HepG2 (cell line): ENCODE measurements at regions of chrX and their contacts with region 1.

Region 1: DNA sequence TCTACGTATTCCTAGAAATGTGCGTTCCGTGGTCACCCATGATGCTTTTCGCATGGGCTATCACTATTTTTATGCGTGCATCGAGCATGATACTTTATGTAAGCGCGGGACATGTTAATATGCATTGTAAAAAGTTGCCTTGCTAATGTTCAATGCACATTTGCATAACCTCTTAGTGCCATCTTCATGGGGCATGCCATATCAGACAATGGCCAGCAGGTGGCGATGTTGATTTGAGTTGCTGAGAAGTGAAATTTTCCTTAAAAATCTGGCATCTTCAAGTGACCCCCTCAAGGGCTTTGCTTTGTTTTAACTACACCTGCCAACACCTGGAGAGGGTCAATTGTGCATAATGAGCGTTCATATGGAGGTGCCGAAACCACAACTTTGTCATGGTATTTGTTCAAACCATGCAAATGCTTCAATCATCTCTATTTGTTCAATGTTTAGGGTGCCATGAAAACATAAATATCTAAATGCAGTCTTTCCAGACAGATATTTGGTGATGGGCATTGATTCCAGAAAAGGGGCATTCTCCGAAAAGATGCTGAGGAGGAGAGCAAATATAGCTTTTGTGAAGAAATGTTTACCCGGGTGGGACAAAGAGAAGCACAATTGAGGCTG is 833.9 kb upstream of the PRKX start:
- DNase-seq: peak; percentile 8
- ATAC-seq: no peak
- H3K4me3 ChIP-seq: no peak overlapping the region
- H3K27ac ChIP-seq: no peak overlapping the region
- H3K4me1 ChIP-seq: no peaks in the 10 kb centered on the region
- H3K27me3 ChIP-seq: no peaks in the 10 kb centered on the region
- CTCF ChIP-seq: peak; percentile 64
- EP300 ChIP-seq: no peak
- POLR2A ChIP-seq: no peak
- RAD21 ChIP-seq: 0 out of 2 replicates have a peak, but pooled peaks have one; percentile 26

Region 2: GRCh38 chrX:3962511-3963311 is 584.6 kb before region 1 on chrX:
- CTCF ChIA-PET with region 1: no interaction called
- POLR2A ChIA-PET with region 1: no interaction called
- in situ Hi-C with region 1: loop called (anchors 25 kb)
- intact Hi-C with region 1: no loop called
- DNase-seq: peak; percentile 1
- ATAC-seq: peak; percentile 49
- H3K4me3 ChIP-seq: no peak overlapping the region
- H3K27ac ChIP-seq: no peak overlapping the region
- H3K4me1 ChIP-seq: no peaks in the 10 kb centered on the region
- H3K27me3 ChIP-seq: no peaks in the 10 kb centered on the region
- CTCF ChIP-seq: peak; percentile 48
- EP300 ChIP-seq: no peak
- POLR2A ChIP-seq: no peak
- RAD21 ChIP-seq: no peak

Region 3: DNA sequence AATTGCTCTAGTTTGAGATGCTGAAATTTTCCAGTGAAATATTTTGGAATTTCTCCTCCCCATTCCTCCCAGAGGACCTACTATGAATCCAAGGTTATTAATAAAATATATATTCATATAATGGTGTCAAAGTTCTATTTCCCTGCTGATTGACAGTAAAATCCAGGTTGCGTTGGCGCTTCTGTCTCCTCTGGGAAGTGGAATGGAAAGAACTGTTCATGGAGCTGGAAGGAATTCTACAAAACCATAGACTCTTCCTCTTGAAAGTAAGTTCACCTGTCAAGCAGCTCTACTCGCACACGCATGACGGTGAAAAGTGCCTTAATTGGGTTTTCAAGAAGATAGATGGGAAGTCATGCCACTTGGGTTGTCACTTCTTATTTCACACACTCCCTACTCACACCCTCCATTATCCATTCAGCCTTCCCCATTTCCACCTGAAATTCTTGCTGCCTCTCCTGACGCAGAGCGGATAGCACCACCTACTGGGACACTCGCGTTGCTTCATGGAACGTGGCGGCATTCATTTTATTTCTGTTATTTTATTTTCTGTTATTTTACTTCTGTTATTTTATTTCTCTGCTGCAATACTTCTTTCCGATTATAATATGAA is 1329.8 kb after region 1 on chrX:
- CTCF ChIA-PET with region 1: no interaction called
- POLR2A ChIA-PET with region 1: no interaction called
- in situ Hi-C with region 1: loop called (anchors 25 kb)
- intact Hi-C with region 1: no loop called
- DNase-seq: peak; percentile 0
- ATAC-seq: no peak
- H3K4me3 ChIP-seq: no peak overlapping the region
- H3K27ac ChIP-seq: no peak overlapping the region
- H3K4me1 ChIP-seq: no peaks in the 10 kb centered on the region
- H3K27me3 ChIP-seq: no peaks in the 10 kb centered on the region
- CTCF ChIP-seq: peak; percentile 57
- EP300 ChIP-seq: no peak
- POLR2A ChIP-seq: no peak
- RAD21 ChIP-seq: no peak